Endothelial cell of umbilical vein (primary cell): ENCODE measurements at regions of chr5 and their contacts with region 1.

Region 1: GRCh38 chr5:151659001-151659754 is 27.5 kb downstream of the SPARC start:
- DNase-seq: peak; percentile 84
- H3K4me3 ChIP-seq: no peak overlapping the region
- H3K27ac ChIP-seq: no peak overlapping the region
- H3K4me1 ChIP-seq: peaks cover 16% of the 10 kb centered on the region
- H3K27me3 ChIP-seq: no peaks in the 10 kb centered on the region
- CTCF ChIP-seq: peak; percentile 85 to 92
- POLR2A ChIP-seq: peak; percentile 49

Region 2: GRCh38 chr5:151196556-151197290 is 462.5 kb before region 1 on chr5:
- CTCF ChIA-PET with region 1: no interaction called
- POLR2A ChIA-PET with region 1: no interaction called
- dilution Hi-C with region 1: no loop called
- intact Hi-C with region 1: no loop called
- DNase-seq: no peak
- H3K4me3 ChIP-seq: no peak overlapping the region
- H3K27ac ChIP-seq: no peak overlapping the region
- H3K4me1 ChIP-seq: no peaks in the 10 kb centered on the region
- H3K27me3 ChIP-seq: no peaks in the 10 kb centered on the region
- CTCF ChIP-seq: no peak
- POLR2A ChIP-seq: no peak

Region 3: DNA sequence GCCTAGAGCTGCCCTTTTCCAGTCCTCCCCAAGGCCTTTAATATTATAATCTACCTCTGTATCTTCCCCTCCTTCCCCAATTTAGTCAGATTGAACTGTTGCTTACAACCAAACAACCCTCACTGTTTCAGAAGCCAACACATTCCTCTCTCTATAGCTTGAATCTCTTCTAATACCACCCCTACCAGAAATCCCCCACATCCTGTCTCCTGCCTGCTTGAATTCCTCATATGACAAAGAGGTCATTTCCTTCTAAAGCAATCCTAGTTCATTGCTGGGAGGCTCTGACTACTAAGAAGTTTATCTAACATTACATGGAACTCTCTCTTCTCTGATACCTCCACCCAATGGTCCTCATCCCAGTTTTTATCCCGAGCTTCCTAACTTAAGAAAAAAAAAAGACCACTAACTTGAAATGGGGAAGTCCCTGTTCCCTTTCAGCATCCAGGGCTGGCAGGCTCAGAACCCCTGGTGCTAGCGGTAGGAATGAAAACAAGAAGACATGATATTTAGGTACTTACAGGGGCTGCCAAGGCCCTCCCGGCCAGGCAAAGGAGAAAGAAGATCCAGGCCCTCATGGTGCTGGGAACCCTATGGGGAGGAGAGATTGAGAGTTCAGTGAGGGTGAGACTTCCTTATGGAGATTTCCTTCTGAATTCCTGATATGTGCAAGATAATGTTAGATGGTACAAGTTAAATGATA is 16.6 kb after region 1 on chr5:
- CTCF ChIA-PET with region 1: interaction called, 39 read pairs
- POLR2A ChIA-PET with region 1: interaction called, 23 read pairs
- dilution Hi-C with region 1: no loop called
- intact Hi-C with region 1: loop called (anchors 1 kb)
- DNase-seq: peak; percentile 87
- H3K4me3 ChIP-seq: peak overlapping the region in 1 of 3 experiments; percentile 16
- H3K27ac ChIP-seq: peak overlapping the region; percentile 99
- H3K4me1 ChIP-seq: peaks cover 98% of the 10 kb centered on the region
- H3K27me3 ChIP-seq: no peaks in the 10 kb centered on the region
- CTCF ChIP-seq: no peak
- POLR2A ChIP-seq: no peak

Region 4: DNA sequence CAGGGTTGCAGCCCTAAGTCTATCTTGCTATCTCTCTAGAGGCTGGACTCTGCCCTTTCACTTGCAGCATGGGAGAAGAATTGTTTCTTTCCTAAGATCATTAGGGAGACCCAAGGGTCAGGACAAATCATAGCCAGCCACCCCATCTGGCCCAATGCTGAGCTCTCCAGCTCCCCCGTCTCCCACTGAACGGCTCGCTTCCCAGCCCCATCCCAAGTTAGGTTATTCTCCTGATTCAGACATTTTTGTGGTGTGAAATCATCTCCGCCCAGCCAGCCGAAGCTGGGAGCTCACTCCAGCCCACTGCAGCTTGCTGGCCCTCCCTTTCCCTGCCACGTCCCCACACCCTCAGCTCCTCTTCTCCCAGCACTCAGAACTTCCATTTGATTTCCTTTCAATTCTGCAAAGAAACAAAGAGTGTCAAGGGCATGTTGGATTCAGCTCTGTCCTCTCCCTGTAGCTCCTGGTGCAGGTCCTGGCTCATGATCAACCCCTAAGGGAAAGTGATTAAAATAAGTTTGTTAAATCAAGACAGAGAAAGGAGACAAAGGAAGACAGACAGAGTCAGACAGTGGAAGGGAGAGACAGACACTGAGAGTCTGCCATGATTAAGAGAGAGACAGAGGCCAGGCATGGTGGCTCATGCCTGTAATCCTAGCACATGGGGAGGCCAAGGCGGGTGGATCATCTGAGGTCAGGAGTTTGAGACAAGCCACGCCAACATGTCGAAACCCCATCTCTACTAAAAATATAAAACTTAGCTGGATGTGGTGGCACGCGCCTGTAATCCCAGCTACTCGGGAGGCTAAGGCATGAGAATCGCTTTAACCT is 40.1 kb after region 1 on chr5:
- CTCF ChIA-PET with region 1: interaction called, 13 read pairs
- POLR2A ChIA-PET with region 1: no interaction called
- dilution Hi-C with region 1: no loop called
- intact Hi-C with region 1: loop called (anchors 1 kb)
- DNase-seq: peak; percentile 94
- H3K4me3 ChIP-seq: no peak overlapping the region
- H3K27ac ChIP-seq: peak overlapping the region; percentile 93
- H3K4me1 ChIP-seq: peaks cover 12% of the 10 kb centered on the region
- H3K27me3 ChIP-seq: no peaks in the 10 kb centered on the region
- CTCF ChIP-seq: no peak
- POLR2A ChIP-seq: peak; percentile 62

Region 5: GRCh38 chr5:151719228-151720000 is 60.2 kb after region 1 on chr5:
- CTCF ChIA-PET with region 1: interaction called, 173 read pairs
- POLR2A ChIA-PET with region 1: no interaction called
- dilution Hi-C with region 1: no loop called
- intact Hi-C with region 1: loop called (anchors 1 kb)
- DNase-seq: peak; percentile 60
- H3K4me3 ChIP-seq: no peak overlapping the region
- H3K27ac ChIP-seq: no peak overlapping the region
- H3K4me1 ChIP-seq: no peaks in the 10 kb centered on the region
- H3K27me3 ChIP-seq: no peaks in the 10 kb centered on the region
- CTCF ChIP-seq: peak; percentile 52 to 67
- POLR2A ChIP-seq: no peak

Region 6: GRCh38 chr5:152205804-152206203 is 546.6 kb after region 1 on chr5:
- CTCF ChIA-PET with region 1: no interaction called
- POLR2A ChIA-PET with region 1: no interaction called
- dilution Hi-C with region 1: no loop called
- intact Hi-C with region 1: no loop called
- DNase-seq: no peak
- H3K4me3 ChIP-seq: no peak overlapping the region
- H3K27ac ChIP-seq: no peak overlapping the region
- H3K4me1 ChIP-seq: no peaks in the 10 kb centered on the region
- H3K27me3 ChIP-seq: no peaks in the 10 kb centered on the region
- CTCF ChIP-seq: no peak
- POLR2A ChIP-seq: no peak